OCI-LY7 (cell line): ENCODE measurements at regions of chr17 and their contacts with region 1.

Region 1: DNA sequence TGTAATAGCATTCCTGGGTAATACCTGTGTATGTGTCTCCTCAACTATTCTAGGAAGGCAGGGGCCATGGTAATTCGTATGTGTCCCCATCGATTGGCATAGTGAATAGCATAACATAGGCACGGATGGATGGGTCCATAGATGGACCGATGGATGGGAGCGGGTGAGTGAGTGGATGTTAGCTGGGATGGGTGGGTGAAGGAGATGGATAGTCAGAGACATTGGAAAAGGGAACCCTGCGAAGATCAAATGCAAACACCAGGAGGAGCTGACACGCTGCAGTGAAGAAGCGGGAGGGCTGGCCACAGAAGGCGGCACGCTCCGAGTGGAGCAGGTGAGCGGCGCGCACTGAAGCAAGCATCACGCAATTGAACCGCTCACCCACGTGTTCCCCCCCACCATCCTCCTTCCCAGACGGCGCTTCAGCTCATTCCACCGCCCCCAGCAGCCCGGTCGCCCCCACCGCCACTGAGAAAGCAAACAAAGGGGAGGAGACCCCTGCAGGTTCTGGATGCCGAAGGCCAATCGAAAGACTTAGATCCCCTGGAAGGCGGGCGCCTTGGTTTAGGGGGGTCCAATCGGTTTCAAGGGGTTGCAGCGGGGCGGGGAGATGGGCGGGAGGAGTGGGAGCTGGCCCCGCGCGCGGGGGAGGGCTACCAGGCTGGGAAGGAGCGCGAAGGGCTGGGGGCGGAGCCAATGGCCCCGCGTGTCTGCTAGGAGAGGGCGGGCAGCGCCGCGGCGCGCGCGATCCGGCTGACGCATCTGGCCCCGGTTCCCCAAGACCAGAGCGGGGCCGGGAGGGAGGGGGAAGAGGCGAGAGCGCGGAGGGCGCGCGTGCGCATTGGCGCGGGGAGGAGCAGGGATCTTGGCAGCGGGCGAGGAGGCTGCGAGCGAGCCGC is at the start of gene ARRB2:
- DNase-seq: peak; percentile 98
- H3K4me3 ChIP-seq: peak within 1 kb of the TSS; percentile 85
- H3K27ac ChIP-seq: peak within 1 kb of the TSS; percentile 64
- H3K4me1 ChIP-seq: peaks cover 29% of the 10 kb centered on the region
- CTCF ChIP-seq: peak; percentile 69
- total RNA-seq, gene ARRB2: 49.8 and 56.7 TPM in 2 replicates

Region 2: GRCh38 chr17:4551133-4551532 is 158.9 kb before region 1 on chr17:
- CTCF ChIA-PET with region 1: no interaction called
- POLR2A ChIA-PET with region 1: no interaction called
- intact Hi-C with region 1: no loop called
- DNase-seq: no peak
- H3K4me3 ChIP-seq: no peak overlapping the region
- H3K27ac ChIP-seq: no peak overlapping the region
- H3K4me1 ChIP-seq: peaks cover 17% of the 10 kb centered on the region
- CTCF ChIP-seq: 0 out of 2 replicates have a peak, but pooled peaks have one; percentile 33

Region 3: GRCh38 chr17:4565209-4566141 is 144.6 kb before region 1 on chr17:
- CTCF ChIA-PET with region 1: interaction called, 3 read pairs
- POLR2A ChIA-PET with region 1: no interaction called
- intact Hi-C with region 1: loop called (anchors 10 kb)
- DNase-seq: peak; percentile 88
- H3K4me3 ChIP-seq: peak overlapping the region; percentile 42
- H3K27ac ChIP-seq: no peak overlapping the region
- H3K4me1 ChIP-seq: peaks cover 32% of the 10 kb centered on the region
- CTCF ChIP-seq: peak; percentile 98

Region 4: GRCh38 chr17:4733073-4733531 is 23.1 kb after region 1 on chr17:
- CTCF ChIA-PET with region 1: no interaction called
- POLR2A ChIA-PET with region 1: interaction called, 3 read pairs
- intact Hi-C with region 1: loop called (anchors 1 kb)
- DNase-seq: peak; percentile 54
- H3K4me3 ChIP-seq: no peak overlapping the region
- H3K27ac ChIP-seq: no peak overlapping the region
- H3K4me1 ChIP-seq: peaks cover 24% of the 10 kb centered on the region
- CTCF ChIP-seq: peak; percentile 62

Region 5: DNA sequence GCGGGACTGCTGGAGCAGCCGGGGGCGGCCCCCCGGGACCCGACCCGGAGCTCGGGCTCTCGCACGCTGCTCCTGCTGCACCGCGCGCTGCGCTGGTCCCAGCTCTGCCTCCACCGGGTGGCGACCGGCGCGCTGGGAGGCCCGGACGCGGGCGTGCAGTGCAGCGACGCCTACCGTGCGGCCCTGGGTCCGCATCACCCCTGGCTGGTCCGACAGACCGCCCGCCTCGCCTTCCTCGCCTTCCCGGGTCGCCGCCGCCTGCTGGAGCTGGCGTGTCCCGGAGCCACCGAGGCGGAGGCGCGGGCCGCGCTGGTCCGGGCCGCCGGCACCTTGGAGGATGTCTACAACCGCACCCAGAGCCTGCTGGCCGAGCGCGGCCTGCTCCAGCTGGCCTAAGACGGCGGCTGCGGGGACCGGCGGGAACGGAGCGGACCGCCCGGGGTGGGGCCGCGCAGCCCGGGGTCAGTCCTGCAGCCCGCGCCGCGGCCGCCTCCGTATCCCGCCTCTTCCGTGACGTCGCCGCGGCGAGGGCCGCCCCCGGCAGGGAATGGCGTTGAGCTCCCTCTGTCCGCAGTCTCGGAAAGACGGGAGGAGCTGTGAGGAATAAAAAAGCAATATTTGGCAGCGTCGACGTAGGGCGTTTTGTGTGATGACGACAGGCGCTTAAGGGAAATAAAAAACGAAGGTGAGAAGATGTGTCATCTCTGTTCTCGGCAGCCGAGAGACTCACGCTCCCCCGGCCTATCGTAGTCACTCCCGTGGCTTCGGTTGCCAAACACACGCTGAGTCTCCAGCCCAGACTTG is 80.1 kb after region 1 on chr17:
- CTCF ChIA-PET with region 1: no interaction called
- POLR2A ChIA-PET with region 1: interaction called, 3 read pairs
- intact Hi-C with region 1: loop called (anchors 1 kb)
- DNase-seq: peak; percentile 90
- H3K4me3 ChIP-seq: peak overlapping the region; percentile 68
- H3K27ac ChIP-seq: peak overlapping the region; percentile 14
- H3K4me1 ChIP-seq: peaks cover 13% of the 10 kb centered on the region
- CTCF ChIP-seq: peak; percentile 81

Region 6: GRCh38 chr17:4891411-4892342 is 181.6 kb after region 1 on chr17:
- CTCF ChIA-PET with region 1: no interaction called
- POLR2A ChIA-PET with region 1: no interaction called
- intact Hi-C with region 1: loop called (anchors 1 kb)
- DNase-seq: no peak
- H3K4me3 ChIP-seq: no peak overlapping the region
- H3K27ac ChIP-seq: no peak overlapping the region
- H3K4me1 ChIP-seq: no peaks in the 10 kb centered on the region
- CTCF ChIP-seq: no peak

Region 7: GRCh38 chr17:5055543-5055942 is 345.5 kb after region 1 on chr17:
- CTCF ChIA-PET with region 1: no interaction called
- POLR2A ChIA-PET with region 1: interaction called, 10 read pairs
- intact Hi-C with region 1: no loop called
- DNase-seq: peak; percentile 27
- H3K4me3 ChIP-seq: no peak overlapping the region
- H3K27ac ChIP-seq: no peak overlapping the region
- H3K4me1 ChIP-seq: peaks cover 10% of the 10 kb centered on the region
- CTCF ChIP-seq: peak; percentile 29; the same call in 1 of the 2 replicates